BJ (cell line): ENCODE measurements at regions of chr6 and their contacts with region 1.

Region 1: GRCh38 chr6:30646458-30647241 is at the start of gene C6orf136:
- DNase-seq: peak; percentile 54
- H3K4me3 ChIP-seq: peak within 1 kb of the TSS; percentile 94
- H3K27me3 ChIP-seq: no peaks in the 10 kb centered on the region
- CTCF ChIP-seq: no peak
- polyA plus RNA-seq, gene C6orf136: 5.4 and 6.0 TPM in 2 replicates

Region 2: DNA sequence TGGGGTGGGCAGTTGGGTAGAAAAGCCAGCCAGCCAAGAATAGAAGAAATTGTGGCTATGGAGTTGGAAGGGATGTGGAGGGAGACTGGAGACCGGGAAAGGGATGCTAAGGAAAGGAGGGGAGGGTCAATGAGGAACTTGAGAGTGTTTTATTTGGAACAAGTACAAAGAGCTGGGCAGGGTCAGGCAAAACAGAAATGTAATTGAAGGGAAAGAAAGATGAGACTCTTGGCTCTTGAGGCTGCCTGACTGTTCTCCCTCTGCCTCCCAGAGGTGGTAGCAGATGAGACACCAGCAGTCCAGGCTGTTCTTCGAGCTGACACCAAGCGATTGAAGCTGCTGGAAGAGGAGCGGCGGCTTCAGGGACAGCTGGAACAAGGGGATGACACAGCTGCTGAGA is 62.7 kb before region 1 on chr6:
- CTCF ChIA-PET with region 1: no interaction called
- POLR2A ChIA-PET with region 1: no interaction called
- DNase-seq: no peak
- H3K4me3 ChIP-seq: no peak overlapping the region
- H3K27me3 ChIP-seq: no peaks in the 10 kb centered on the region
- CTCF ChIP-seq: no peak

Region 3: GRCh38 chr6:30776390-30777154 is 129.9 kb after region 1 on chr6:
- CTCF ChIA-PET with region 1: no interaction called
- POLR2A ChIA-PET with region 1: interaction called, 16 read pairs
- DNase-seq: no peak
- H3K4me3 ChIP-seq: no peak overlapping the region
- H3K27me3 ChIP-seq: no peaks in the 10 kb centered on the region
- CTCF ChIP-seq: no peak